Activated CD8-positive, alpha-beta T cell treated with anti-CD3 and anti-CD28 coated beads for 36 hours (primary cell): ENCODE measurements at regions of chr3 and their contacts with region 1.

Region 1: DNA sequence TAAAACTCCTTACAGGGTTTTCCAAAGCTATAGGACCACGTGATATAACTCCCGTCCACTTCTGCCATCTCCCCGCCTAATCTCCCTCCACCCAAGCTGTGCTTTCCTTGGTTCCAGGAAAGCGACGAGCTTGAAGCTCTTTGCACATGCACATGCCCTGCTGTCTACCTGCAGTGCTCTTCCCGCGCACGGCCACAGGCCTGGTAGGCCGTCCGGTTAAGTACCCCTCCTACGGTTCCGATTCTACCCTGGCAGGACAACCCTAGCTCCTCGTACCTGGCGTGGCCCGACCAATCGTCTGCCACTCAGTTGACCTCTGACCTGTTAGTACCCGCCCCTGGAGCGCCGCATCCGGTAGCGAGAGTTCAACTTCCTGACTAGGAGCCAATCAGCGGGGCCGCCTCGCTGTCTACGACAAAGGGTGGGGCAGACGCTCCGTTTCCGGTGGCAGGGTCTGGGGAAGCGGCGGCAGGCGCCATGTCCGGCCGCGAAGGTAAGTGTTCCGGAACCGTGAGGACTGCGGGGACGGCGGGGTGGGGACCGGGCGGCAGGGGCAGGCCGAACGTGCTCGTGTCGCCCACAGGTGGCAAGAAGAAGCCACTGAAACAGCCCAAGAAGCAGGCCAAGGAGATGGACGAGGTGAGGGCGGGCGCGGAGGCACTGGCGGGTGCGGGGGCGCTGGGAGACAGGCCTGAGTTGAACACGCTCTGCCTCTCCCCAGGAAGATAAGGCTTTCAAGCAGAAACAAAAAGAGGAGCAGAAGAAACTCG is at the starts of genes CCDC51 and TMA7:
- DNase-seq: peak; percentile 99
- ATAC-seq: peak; percentile 98
- H3K4me3 Mint-ChIP-seq: peak within 1 kb of the TSS; percentile 89
- H3K27ac Mint-ChIP-seq: peak within 1 kb of the TSS; percentile 97
- H3K4me1 Mint-ChIP-seq: peaks cover 30% of the 10 kb centered on the region
- H3K27me3 Mint-ChIP-seq: no peaks in the 10 kb centered on the region
- CTCF ChIP-seq: no peak
- total RNA-seq, gene CCDC51: 25.3 to 28.3 TPM
- total RNA-seq, gene TMA7: 312 to 334 TPM

Region 2: GRCh38 chr3:48194446-48195071 is 245.4 kb before region 1 on chr3:
- CTCF ChIA-PET with region 1: interaction called, 19 read pairs
- POLR2A ChIA-PET with region 1: no interaction called
- intact Hi-C with region 1: no loop called
- DNase-seq: peak; percentile 43
- ATAC-seq: peak; percentile 47
- H3K4me3 Mint-ChIP-seq: no peak overlapping the region
- H3K27ac Mint-ChIP-seq: no peak overlapping the region
- H3K4me1 Mint-ChIP-seq: no peaks in the 10 kb centered on the region
- H3K27me3 Mint-ChIP-seq: no peaks in the 10 kb centered on the region
- CTCF ChIP-seq: peak; percentile 68

Region 3: DNA sequence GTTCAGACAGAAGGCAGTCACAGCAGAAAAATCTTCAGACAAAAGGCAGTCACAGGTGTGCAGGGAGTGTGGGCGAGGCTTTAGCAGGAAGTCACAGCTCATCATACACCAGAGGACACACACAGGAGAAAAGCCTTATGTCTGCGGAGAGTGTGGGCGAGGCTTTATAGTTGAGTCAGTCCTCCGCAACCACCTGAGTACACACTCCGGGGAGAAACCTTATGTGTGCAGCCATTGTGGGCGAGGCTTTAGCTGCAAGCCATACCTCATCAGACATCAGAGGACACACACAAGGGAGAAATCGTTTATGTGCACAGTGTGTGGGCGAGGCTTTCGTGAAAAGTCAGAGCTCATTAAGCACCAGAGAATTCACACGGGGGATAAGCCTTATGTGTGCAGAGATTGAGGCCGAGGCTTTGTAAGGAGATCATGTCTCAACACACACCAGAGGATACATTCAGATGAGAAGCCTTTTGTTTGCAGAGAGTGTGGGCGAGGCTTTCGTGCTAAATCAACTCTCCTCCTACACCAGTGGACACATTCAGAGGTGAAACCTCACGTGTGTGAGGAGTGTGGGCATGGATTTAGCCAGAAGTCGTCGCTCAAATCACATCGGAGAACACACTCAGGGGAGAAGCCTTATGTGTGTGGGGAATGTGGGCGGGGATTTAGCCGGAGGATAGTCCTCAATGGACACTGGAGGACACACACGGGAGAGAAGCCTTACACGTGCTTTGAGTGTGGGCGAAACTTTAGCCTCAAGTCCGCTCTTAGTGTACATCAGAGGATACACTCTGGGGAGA is 171.4 kb before region 1 on chr3:
- CTCF ChIA-PET with region 1: interaction called, 135 read pairs
- POLR2A ChIA-PET with region 1: interaction called, 8 read pairs
- intact Hi-C with region 1: loop called (anchors 5 kb)
- DNase-seq: peak; percentile 98
- ATAC-seq: peak; percentile 93
- H3K4me3 Mint-ChIP-seq: peak overlapping the region; percentile 61
- H3K27ac Mint-ChIP-seq: peak overlapping the region; percentile 98
- H3K4me1 Mint-ChIP-seq: peaks cover 42% of the 10 kb centered on the region
- H3K27me3 Mint-ChIP-seq: no peaks in the 10 kb centered on the region
- CTCF ChIP-seq: no peak

Region 4: GRCh38 chr3:48372377-48372770 is 67.6 kb before region 1 on chr3:
- CTCF ChIA-PET with region 1: interaction called, 10 read pairs
- POLR2A ChIA-PET with region 1: no interaction called
- intact Hi-C with region 1: no loop called
- DNase-seq: no peak
- ATAC-seq: no peak
- H3K4me3 Mint-ChIP-seq: no peak overlapping the region
- H3K27ac Mint-ChIP-seq: no peak overlapping the region
- H3K4me1 Mint-ChIP-seq: peaks cover 2% of the 10 kb centered on the region
- H3K27me3 Mint-ChIP-seq: no peaks in the 10 kb centered on the region
- CTCF ChIP-seq: no peak

Region 5: GRCh38 chr3:48416091-48416505 is 23.9 kb before region 1 on chr3:
- CTCF ChIA-PET with region 1: interaction called, 27 read pairs
- POLR2A ChIA-PET with region 1: interaction called, 9 read pairs
- intact Hi-C with region 1: no loop called
- DNase-seq: no peak
- ATAC-seq: no peak
- H3K4me3 Mint-ChIP-seq: no peak overlapping the region
- H3K27ac Mint-ChIP-seq: no peak overlapping the region
- H3K4me1 Mint-ChIP-seq: no peaks in the 10 kb centered on the region
- H3K27me3 Mint-ChIP-seq: no peaks in the 10 kb centered on the region
- CTCF ChIP-seq: no peak

Region 6: DNA sequence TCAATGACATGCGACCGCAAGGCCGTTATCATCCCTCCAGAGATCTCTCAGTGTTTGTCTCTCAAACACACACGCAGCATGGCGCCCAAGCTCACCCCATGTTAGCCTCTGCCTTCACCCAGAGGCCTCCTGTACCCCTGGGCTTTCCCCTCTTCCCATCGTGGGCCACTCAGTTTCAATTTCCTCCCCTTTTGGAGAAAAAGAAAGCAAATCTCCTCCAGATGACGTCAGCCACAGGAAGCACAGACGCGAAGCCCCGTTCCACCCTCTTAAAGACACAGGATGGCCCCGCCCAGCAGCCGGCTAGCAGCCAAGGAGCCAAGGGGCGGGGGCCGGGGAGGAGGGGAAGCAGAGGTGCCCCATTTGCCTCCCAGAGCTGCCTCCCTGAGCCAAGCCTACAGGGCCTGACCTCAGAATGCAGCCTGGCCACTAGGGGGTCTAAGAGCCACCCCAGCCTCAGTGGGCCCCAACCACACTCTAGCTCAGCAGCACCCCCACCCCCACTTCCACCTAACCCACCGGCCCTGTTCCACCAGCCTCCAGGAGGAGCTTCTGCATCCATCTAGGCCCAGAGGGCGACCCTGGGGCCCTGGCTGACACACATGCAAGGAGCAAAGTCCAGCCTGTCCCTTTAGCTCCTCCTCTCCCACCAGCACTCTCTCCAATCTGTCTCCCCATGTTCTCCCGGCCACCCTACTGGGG is 33.1 kb after region 1 on chr3:
- CTCF ChIA-PET with region 1: interaction called, 35 read pairs
- POLR2A ChIA-PET with region 1: interaction called, 32 read pairs
- intact Hi-C with region 1: no loop called
- DNase-seq: peak; percentile 99
- ATAC-seq: peak; percentile 92
- H3K4me3 Mint-ChIP-seq: peak overlapping the region; percentile 80
- H3K27ac Mint-ChIP-seq: peak overlapping the region; percentile 96
- H3K4me1 Mint-ChIP-seq: peaks cover 50% of the 10 kb centered on the region
- H3K27me3 Mint-ChIP-seq: no peaks in the 10 kb centered on the region
- CTCF ChIP-seq: peak; percentile 55

Region 7: DNA sequence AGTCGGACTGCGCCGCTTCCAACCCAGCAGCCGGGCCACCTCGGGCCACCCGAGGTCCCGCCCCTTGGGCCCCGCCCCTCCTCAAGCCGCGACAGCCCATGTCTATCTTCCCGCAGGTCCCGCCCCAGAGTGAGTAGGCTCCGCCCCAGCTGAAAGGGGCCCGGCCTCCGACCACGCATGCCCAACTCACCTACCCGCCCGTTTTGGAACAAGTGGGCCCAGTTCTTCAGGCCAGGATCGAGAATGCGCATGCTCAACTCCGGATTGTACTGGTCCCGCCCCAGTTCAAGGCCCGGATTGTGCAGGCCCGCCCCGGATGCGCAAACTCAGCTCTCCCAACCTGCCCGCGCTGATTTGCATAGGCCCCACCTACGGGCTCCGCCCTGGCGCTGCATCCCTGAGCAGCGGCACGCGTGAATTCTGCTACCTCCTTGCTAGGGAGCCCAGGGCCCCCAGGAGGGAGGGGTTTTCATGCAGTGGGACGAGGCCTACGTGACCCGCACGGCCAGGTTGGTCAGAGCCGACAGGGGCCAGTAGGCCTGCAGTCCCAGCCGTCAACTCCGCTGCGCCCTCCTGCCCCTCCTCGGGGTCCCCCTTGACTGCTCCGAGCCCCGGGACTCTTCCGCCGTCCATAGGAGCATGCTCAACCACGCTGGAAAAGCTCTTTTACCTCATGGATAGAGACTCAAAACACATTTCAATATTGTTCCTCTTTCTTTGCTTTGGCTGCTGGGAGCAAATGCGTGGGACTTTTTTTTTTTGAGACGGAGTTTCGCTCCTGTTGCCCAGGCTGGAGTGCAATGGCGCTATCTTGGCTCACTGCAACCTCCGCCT is 117.0 kb after region 1 on chr3 and contains the start of gene PFKFB4:
- CTCF ChIA-PET with region 1: interaction called, 116 read pairs
- POLR2A ChIA-PET with region 1: interaction called, 5 read pairs
- intact Hi-C with region 1: no loop called
- DNase-seq: peak; percentile 100
- ATAC-seq: peak; percentile 89
- H3K4me3 Mint-ChIP-seq: peak within 1 kb of the TSS; percentile 89
- H3K27ac Mint-ChIP-seq: peak within 1 kb of the TSS; percentile 93
- H3K4me1 Mint-ChIP-seq: peaks cover 34% of the 10 kb centered on the region
- H3K27me3 Mint-ChIP-seq: no peaks in the 10 kb centered on the region
- CTCF ChIP-seq: no peak
- total RNA-seq, gene PFKFB4: 90.8 to 94.0 TPM

Region 8: DNA sequence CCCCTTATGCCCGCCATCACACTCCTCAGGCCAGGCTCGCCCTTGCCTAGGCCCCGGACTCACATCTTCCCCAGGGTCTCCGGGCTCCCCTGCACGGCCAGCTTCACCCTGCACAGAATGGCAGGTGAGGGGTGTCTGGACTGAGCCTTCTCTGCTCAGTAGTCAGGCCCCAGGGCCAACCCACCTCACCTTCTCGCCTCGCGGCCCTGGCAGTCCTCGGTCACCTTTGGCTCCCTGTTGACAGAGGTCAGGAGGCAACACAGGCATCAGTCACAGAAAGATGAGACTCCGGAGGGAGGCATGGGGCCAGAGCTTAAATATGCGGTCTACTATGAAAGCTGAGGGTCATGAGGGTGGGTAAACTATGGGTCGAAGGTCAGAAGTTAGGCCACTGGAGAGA is 131.9 kb after region 1 on chr3:
- CTCF ChIA-PET with region 1: no interaction called
- POLR2A ChIA-PET with region 1: no interaction called
- intact Hi-C with region 1: no loop called
- DNase-seq: no peak
- ATAC-seq: no peak
- H3K4me3 Mint-ChIP-seq: no peak overlapping the region
- H3K27ac Mint-ChIP-seq: no peak overlapping the region
- H3K4me1 Mint-ChIP-seq: no peaks in the 10 kb centered on the region
- H3K27me3 Mint-ChIP-seq: no peaks in the 10 kb centered on the region
- CTCF ChIP-seq: no peak